ENCODE measurements at regions of chr9 and their contacts with region 1.

Region 1: DNA sequence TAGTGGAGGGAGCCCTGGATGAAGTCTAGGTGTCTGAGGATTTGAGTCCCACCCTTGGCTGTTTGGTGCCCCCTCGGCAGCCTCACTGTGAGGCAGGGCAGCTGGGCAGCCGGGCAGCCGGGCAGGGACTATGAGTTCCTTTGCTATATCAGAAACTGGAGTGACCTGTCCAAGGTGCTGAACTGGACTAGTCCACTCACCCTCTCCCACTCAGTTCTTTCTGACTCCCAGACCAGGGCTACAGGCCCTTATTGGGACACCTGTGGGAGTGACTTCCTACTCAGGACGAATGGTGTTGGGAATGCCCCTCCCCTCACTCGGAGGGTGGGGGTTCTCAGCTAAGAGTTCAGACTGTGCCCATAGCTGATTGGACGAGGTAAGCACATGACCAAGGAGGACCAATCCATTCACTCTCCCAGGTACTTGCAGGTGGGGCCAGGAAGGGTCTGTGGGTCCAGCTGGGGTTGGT is 34.1 kb upstream of the RAPGEF1 start:
- DNase-seq: no peak

Region 2: DNA sequence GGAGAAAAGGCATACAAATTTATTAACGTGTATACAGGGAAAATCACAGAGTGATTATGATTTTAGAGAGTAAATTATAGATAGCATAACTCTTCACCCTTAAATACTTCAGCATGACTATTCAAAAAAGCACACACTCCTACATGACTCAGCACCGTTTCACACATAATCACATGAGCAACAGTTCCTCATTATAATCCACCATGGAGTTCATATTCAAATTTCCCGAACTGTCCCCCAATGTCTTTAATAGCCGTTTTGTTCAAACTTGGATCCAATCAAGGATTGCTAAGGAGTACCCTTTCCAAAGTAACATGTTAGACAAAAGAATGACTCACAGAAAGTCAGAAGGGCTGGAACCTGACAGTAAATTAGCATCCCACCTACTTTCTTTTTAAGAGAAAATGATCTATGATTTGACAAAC is 66.2 kb before region 1 on chr9:
- intact Hi-C with region 1: no loop called
- DNase-seq: no peak

Region 3: GRCh38 chr9:131845305-131846298 is 71.7 kb after region 1 on chr9:
- intact Hi-C with region 1: no loop called
- DNase-seq: no peak

Region 4: GRCh38 chr9:132114102-132114707 is 340.3 kb after region 1 on chr9:
- intact Hi-C with region 1: loop called (anchors 10 kb)
- DNase-seq: no peak